A673 (cell line): ENCODE measurements at regions of chr2 and their contacts with region 1.

Region 1: GRCh38 chr2:132670496-132671150 is 618 bp upstream of the LYPD1 start:
- DNase-seq: peak; percentile 55
- H3K4me3 ChIP-seq: peak overlapping the region; percentile 68
- H3K27ac ChIP-seq: peak overlapping the region; percentile 21
- H3K4me1 ChIP-seq: peaks cover 38% of the 10 kb centered on the region
- H3K27me3 ChIP-seq: no peaks in the 10 kb centered on the region
- CTCF ChIP-seq: no peak

Region 2: GRCh38 chr2:132547074-132547687 is 123.4 kb before region 1 on chr2:
- CTCF ChIA-PET with region 1: interaction called, 3 read pairs
- POLR2A ChIA-PET with region 1: no interaction called
- intact Hi-C with region 1: loop called (anchors 5 kb)
- DNase-seq: peak; percentile 88
- H3K4me3 ChIP-seq: no peak overlapping the region
- H3K27ac ChIP-seq: no peak overlapping the region
- H3K4me1 ChIP-seq: peaks cover 14% of the 10 kb centered on the region
- H3K27me3 ChIP-seq: no peaks in the 10 kb centered on the region
- CTCF ChIP-seq: peak; percentile 82

Region 3: DNA sequence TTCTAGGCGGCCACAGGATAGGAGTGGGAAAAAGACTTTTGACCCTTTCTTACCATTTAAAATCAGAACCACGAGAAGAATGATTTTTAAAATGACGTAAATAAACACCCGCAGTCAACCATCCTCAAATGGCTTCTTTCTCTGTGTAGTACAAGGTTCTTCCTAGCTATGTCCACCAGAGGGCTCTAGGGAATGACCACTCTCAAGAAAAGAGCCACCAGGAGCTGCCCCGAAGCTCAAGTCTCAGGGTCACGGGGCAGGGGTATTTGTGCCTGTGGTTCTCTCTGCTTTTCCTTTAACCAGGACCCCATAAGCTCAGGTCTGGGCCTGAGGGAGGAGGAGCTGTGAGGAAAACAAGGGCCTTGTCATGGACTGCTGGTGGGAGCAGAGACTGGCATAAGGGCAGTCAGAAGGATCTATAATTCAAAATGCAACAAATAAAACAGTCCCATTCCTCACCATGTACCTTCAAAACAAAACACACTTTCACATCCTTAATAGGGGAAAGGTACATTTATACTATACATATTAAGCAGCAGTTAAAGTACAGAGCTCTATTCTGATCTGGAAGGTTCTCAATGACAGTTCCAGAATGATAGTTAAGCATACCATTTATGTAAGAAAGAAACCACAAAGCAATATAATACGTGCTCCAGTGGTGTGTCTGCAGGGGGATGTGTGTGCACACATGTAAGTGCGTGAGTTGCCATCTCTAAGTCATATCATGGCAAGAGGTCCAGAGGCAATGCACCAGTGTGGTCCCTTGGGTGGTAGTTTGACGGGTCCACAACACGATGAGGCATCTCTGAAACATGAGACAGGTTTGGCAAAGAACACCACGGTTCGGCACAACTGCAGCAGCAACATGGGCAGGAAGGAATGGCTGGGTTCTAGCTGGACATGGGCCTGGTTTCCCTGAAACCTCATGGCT is 19.2 kb before region 1 on chr2:
- CTCF ChIA-PET with region 1: no interaction called
- POLR2A ChIA-PET with region 1: no interaction called
- intact Hi-C with region 1: no loop called
- DNase-seq: peak; percentile 45
- H3K4me3 ChIP-seq: no peak overlapping the region
- H3K27ac ChIP-seq: no peak overlapping the region
- H3K4me1 ChIP-seq: peaks cover 16% of the 10 kb centered on the region
- H3K27me3 ChIP-seq: peaks cover 4% of the 10 kb centered on the region
- CTCF ChIP-seq: peak; percentile 57

Region 4: GRCh38 chr2:132977812-132978529 is 307.3 kb after region 1 on chr2:
- CTCF ChIA-PET with region 1: no interaction called
- POLR2A ChIA-PET with region 1: interaction called, 9 read pairs
- intact Hi-C with region 1: loop called (anchors 10 kb)
- DNase-seq: peak; percentile 94
- H3K4me3 ChIP-seq: no peak overlapping the region
- H3K27ac ChIP-seq: no peak overlapping the region
- H3K4me1 ChIP-seq: peaks cover 48% of the 10 kb centered on the region
- H3K27me3 ChIP-seq: no peaks in the 10 kb centered on the region
- CTCF ChIP-seq: no peak

Region 5: GRCh38 chr2:133063775-133064174 is 393.2 kb after region 1 on chr2:
- CTCF ChIA-PET with region 1: no interaction called
- POLR2A ChIA-PET with region 1: no interaction called
- intact Hi-C with region 1: loop called (anchors 10 kb)
- DNase-seq: peak; percentile 73
- H3K4me3 ChIP-seq: no peak overlapping the region
- H3K27ac ChIP-seq: no peak overlapping the region
- H3K4me1 ChIP-seq: peaks cover 16% of the 10 kb centered on the region
- H3K27me3 ChIP-seq: no peaks in the 10 kb centered on the region
- CTCF ChIP-seq: no peak

Region 6: DNA sequence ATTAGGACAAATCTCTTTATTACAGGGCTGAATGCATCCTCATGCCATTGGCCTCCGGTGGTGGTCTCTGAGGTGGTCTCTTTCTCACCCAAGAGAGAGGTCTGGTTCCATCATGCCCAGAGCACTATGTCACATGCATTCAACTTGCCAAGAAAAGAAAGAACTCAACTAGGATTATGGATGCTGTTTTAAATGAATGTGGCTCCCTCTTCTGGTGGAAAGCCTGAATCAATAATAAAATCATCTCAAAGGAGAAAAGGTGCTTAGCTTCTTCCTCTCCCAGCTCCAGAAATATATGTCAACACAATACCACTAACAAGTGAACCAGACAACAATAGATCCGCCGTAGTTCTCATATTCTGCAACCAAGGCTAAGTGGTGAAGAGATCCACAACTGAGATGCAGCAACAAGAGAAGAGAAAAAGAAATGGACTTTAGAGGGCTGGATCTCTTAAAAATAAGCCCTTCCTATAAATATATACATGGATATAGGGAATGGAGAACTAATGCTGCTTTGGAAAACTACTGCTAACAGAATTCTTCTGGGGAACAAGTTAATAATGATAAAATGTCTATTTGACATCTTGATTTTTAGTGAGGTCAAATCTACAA is 500.9 kb after region 1 on chr2:
- CTCF ChIA-PET with region 1: no interaction called
- POLR2A ChIA-PET with region 1: no interaction called
- intact Hi-C with region 1: loop called (anchors 5 kb)
- DNase-seq: peak; percentile 89
- H3K4me3 ChIP-seq: no peak overlapping the region
- H3K27ac ChIP-seq: no peak overlapping the region
- H3K4me1 ChIP-seq: peaks cover 60% of the 10 kb centered on the region
- H3K27me3 ChIP-seq: no peaks in the 10 kb centered on the region
- CTCF ChIP-seq: peak; percentile 83

Region 7: DNA sequence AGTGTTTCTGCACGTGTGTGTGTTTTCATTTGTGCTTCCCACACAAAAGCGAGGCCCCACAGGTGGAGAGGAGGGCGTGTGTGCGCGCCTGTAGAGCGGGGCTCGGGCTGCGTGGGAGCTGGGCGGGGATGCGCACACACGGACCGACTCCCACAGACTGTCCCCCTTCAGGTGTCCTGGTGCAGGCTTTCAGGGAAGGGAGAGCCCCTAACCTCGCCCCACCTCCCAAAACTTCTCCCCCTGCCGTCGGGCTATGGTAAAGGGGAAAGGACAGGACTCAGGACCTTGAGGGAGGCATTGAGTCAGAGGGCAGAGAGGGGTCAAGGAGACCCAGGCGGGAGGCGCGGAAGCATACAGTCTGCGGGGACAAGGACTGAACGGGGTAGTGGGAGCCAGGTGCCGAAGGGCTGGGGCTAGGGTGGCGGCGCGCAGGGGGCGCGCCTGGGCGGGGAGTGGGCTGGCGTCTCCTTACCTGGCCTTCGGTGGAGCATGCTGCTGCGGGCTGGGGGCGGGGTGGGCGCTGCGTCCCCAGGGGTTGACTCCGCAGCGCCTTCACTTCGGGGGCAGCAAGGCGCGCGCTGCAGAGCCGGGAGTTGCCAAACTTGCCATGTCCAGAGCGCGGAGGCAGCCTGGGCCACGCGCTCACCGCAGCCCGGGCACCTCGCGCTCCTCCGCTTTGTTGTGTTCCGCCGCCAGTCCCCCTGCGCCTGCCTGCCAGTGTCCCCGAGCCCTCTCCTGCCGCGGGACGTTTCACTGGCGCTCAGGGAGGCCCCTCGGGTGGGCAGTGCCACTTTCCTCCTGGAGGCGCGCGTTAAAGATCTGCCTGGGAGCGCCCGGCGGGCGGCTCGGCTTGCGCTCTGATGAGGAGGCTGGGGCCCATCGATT is 595.7 kb after region 1 on chr2:
- CTCF ChIA-PET with region 1: interaction called, 5 read pairs
- POLR2A ChIA-PET with region 1: no interaction called
- intact Hi-C with region 1: loop called (anchors 10 kb)
- DNase-seq: peak; percentile 69
- H3K4me3 ChIP-seq: peak overlapping the region; percentile 81
- H3K27ac ChIP-seq: peak overlapping the region; percentile 81
- H3K4me1 ChIP-seq: peaks cover 50% of the 10 kb centered on the region
- H3K27me3 ChIP-seq: no peaks in the 10 kb centered on the region
- CTCF ChIP-seq: peak; percentile 47

Region 8: DNA sequence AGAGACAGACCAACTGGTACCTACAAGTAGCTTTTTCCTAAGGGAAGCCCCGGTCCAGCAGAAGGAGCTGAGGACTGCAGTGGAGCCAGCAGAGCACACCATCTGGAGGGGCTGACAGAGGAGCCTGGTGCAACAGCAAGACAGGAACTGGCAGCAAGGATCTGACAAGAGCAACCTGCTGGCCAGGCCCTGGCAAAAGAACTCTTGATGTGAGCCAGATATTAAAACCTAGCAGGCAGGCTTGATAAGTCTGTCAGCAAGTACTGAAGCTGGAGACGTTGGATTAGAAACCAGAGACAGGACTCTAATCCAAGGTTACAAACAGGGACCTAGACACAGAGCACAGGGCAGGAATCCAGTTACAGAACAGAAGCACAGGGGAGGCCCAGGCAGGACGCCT is 1322.5 kb after region 1 on chr2:
- CTCF ChIA-PET with region 1: no interaction called
- POLR2A ChIA-PET with region 1: no interaction called
- intact Hi-C with region 1: no loop called
- DNase-seq: no peak
- H3K4me3 ChIP-seq: no peak overlapping the region
- H3K27ac ChIP-seq: no peak overlapping the region
- H3K4me1 ChIP-seq: no peaks in the 10 kb centered on the region
- H3K27me3 ChIP-seq: peaks cover 7% of the 10 kb centered on the region
- CTCF ChIP-seq: no peak